ENCODE measurements at regions of chr19 and their contacts with region 1.

Region 1: GRCh38 chr19:4638828-4639530 is at the start of gene TNFAIP8L1:
- DNase-seq: peak; percentile 99
- ATAC-seq: peak; percentile 96
- H3K4me3 Mint-ChIP-seq: peak within 1 kb of the TSS; percentile 98
- H3K27ac Mint-ChIP-seq: peak within 1 kb of the TSS; percentile 98
- H3K4me1 Mint-ChIP-seq: peaks cover 34% of the 10 kb centered on the region
- H3K27me3 Mint-ChIP-seq: no peaks in the 10 kb centered on the region
- CTCF ChIP-seq: no peak
- total RNA-seq, gene TNFAIP8L1: 13.5 to 13.7 TPM

Region 2: DNA sequence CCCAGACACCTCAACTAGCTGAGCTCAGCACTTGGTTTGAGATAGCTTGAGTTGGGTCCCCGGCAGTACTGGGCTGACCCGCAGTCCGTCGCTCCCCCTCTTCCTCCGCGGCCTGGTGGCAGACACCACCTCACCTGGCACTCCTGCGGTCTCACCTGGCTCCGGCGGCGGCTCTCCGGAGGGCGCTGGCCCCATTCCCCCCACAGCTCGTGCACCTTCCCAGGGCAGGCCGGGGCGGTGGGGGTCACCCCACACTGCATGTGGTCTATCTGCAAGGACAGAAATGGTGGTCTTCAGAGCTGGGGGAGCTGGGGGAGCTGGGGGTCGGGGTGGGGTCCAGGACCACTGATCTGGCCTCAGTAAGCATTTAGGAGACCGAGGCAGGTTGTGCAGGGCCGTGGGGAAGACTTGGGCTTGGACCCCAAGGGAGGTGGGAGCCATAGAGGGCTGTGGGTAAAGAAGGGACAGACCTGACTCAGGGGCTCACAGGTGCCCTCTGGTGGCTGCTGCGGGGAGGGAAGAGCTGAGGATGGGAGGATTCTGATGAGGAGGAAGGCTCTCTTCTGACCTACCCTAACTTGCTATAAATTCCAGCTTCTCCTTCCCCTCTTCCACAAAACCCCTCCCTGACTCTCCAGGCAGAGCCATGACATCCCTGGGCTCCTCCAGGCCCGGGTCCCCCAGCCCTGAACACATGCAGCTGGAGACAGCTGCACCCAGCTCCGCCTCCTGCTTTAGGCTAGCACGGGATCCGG is 114.0 kb before region 1 on chr19:
- CTCF ChIA-PET with region 1: interaction called, 17 read pairs
- POLR2A ChIA-PET with region 1: no interaction called
- intact Hi-C with region 1: no loop called
- DNase-seq: peak; percentile 84
- ATAC-seq: peak; percentile 94
- H3K4me3 Mint-ChIP-seq: no peak overlapping the region
- H3K27ac Mint-ChIP-seq: no peak overlapping the region
- H3K4me1 Mint-ChIP-seq: no peaks in the 10 kb centered on the region
- H3K27me3 Mint-ChIP-seq: no peaks in the 10 kb centered on the region
- CTCF ChIP-seq: peak; percentile 71

Region 3: DNA sequence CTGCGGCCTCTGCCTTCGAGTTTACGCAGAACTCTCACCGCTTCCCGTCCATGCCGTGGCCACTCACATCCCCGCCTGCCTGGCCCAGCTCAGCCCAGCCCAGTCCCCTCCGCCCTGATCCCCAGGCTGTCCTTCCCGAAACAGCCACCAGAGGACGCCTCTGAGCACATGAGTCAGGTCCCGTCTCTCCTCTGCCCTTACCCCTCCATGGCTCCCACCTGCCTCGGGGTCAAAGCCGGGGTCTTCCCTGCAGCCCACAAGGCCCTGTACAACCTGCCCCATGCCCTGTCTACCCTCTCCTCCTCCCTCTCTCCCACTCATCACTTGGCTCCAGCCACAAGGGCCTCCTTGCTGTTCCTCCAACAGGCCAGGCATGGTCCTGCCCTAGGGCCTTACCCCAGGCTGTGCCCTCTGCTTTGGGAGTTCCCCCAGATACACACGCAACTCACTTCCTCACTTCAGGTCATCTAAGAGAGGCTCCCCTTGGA is 71.4 kb before region 1 on chr19:
- CTCF ChIA-PET with region 1: interaction called, 80 read pairs
- POLR2A ChIA-PET with region 1: no interaction called
- intact Hi-C with region 1: no loop called
- DNase-seq: peak; percentile 82
- ATAC-seq: peak; percentile 96
- H3K4me3 Mint-ChIP-seq: no peak overlapping the region
- H3K27ac Mint-ChIP-seq: no peak overlapping the region
- H3K4me1 Mint-ChIP-seq: no peaks in the 10 kb centered on the region
- H3K27me3 Mint-ChIP-seq: no peaks in the 10 kb centered on the region
- CTCF ChIP-seq: peak; percentile 83

Region 4: GRCh38 chr19:4583961-4584669 is 54.9 kb before region 1 on chr19:
- CTCF ChIA-PET with region 1: interaction called, 11 read pairs
- POLR2A ChIA-PET with region 1: interaction called, 4 read pairs
- intact Hi-C with region 1: loop called (anchors 5 kb)
- DNase-seq: peak; percentile 42
- ATAC-seq: peak; percentile 69
- H3K4me3 Mint-ChIP-seq: no peak overlapping the region
- H3K27ac Mint-ChIP-seq: no peak overlapping the region
- H3K4me1 Mint-ChIP-seq: peaks cover 9% of the 10 kb centered on the region
- H3K27me3 Mint-ChIP-seq: peaks cover 42% of the 10 kb centered on the region
- CTCF ChIP-seq: no peak

Region 5: DNA sequence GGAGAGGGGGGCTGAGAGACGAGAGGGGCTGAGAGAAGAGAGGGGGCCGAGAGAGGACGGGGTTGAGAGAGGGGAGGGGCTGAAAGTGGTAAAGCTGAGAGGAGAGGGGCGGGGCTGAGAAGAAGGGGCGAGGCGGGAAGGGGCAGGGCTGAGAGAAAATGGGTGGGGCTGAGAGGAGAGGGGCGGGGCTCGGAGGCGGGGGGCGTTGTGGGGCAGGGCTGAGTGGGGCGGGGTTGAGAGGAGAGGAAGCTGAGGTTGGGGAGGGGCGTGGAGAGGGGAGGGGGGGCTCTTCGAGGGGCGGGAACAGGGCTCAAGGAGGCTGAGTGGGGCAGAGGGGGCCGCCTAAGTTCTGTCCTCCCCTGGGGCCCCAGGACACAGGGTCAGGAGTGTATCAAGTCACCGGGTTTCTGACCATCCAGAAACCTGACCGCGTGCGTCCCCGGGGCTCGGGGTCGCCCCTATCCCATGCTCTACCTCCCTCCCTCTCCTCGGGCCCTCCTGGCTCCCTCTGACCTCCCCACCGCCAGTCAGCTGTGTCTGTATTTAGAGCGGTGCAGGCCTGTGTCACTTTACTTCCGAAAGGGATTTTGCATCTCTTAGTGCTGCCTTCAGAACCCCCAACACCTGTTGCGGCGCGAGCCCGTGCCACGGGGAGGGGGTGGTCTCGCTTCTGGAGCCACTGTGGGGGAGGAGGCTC is 40.9 kb before region 1 on chr19:
- CTCF ChIA-PET with region 1: interaction called, 20 read pairs
- POLR2A ChIA-PET with region 1: no interaction called
- intact Hi-C with region 1: no loop called
- DNase-seq: peak; percentile 72
- ATAC-seq: peak; percentile 86
- H3K4me3 Mint-ChIP-seq: no peak overlapping the region
- H3K27ac Mint-ChIP-seq: no peak overlapping the region
- H3K4me1 Mint-ChIP-seq: peaks cover 3% of the 10 kb centered on the region
- H3K27me3 Mint-ChIP-seq: peaks cover 35% of the 10 kb centered on the region
- CTCF ChIP-seq: no peak

Measured in activated CD8-positive, alpha-beta T cell treated with anti-CD3 and anti-CD28 coated beads for 36 hours (primary cell).